ENCODE measurements at regions of chr15 and their contacts with region 1.

Region 1: DNA sequence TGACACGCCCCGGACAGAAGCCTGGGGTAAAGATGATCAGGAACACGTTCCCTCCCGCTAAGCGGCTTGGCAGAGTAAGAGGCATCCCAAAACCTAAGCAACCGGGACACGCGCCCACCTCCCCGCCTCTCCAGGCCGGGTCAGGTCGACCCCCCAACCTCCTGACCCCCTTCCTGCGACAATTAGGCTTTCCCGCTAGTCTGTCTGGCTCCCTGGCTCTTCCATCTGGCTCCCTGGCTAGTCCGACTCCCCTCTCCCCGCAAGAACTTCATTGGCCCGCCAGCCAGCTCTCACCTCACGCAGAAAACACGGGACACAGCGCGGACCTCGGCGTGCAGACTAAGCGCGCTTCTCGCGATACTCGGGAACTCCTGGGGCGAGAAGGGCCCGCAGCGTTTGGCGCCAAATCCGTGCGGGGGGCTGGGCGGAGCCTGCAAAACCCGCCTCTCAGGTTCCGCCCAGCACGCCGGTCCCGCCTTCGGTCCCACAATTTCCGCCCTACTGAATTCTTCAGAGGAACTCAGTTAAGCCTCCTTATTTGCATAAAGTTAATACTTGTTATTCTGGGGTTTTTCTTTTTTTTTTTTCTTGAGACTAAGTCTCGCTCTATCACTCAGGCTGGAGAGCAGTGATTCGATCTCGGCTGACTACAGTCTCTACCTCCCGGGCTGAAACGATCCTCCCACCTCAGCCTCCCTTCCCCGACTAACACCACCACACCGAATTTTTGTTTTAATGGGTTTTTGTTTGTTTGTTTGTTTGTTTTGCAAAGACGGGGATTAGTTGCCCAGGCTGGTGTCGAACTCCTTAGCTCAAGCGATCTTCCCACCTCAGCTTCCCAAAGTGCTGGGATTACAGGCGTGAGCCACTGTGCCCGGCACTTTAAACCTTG is at the start of gene TIPIN:
- DNase-seq: peak; percentile 90 to 96 (median 95)
- ATAC-seq: peak; percentile 99
- H3K4me3 ChIP-seq: peak within 1 kb of the TSS; percentile 92
- H3K4me3 Mint-ChIP-seq: peak within 1 kb of the TSS; percentile 92 to 100 (median 96)
- H3K27ac ChIP-seq: peak within 1 kb of the TSS; percentile 82
- H3K27ac Mint-ChIP-seq: peak within 1 kb of the TSS; percentile 90 to 98 (median 97)
- H3K4me1 ChIP-seq: peaks cover 4 to 6% of the 10 kb centered on the region in 2 donors
- H3K4me1 Mint-ChIP-seq: peaks cover 18 to 35% (median 26%) of the 10 kb centered on the region in 7 donors
- H3K27me3 ChIP-seq: no peaks in the 10 kb centered on the region
- H3K27me3 Mint-ChIP-seq: no peaks in the 10 kb centered on the region
- total RNA-seq, gene TIPIN: 3.8 to 28.2 (median 9.9) TPM

Region 2: DNA sequence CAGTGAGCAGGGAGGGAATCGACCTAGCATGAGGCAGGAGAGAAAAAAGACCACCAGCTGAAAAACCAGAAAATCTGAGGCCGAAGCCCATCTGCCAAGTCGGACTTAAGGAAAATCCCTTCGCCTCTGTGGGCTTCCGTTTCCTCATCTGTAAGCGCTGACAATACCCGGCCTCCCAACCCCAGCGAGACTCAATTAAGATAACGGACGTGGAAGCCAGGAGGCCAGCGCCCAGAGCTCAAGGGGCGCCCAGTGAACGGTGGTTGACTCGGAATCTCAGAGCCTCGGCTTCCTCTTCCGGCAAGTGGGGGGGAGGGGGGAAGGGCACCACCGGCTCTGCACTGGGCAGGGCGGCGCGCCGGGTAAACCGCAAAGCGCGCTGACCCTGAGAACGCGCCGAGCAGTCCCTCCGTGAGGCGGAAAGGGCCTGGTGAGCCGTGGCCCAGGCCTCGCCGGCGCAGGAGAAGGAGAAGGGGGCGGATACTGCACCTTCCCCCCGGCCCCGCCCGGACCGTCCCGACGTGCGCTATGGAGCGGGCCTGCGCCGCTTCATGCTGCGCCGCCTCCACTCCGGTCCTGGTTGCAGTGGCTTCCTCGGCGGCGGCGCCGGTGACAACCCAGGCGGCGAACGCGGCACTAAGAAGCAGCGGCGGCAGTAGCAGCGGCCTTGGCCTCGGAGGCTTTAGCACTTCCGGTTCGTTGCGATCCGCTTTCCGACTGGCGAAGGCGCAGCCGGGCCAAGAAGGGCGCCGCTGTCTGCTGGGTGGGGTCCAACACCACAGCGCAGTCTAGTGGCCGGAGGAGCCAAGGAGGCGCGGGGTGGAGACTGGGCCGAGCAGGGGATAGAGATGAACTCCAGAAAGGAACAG is 839.4 kb before region 1 on chr15 and contains the start of gene DPP8:
- CTCF ChIA-PET with region 1: no interaction called
- POLR2A ChIA-PET with region 1: no interaction called
- intact Hi-C with region 1: loop called in 1 of 2 experiments (anchors 1 kb)
- DNase-seq: peak; percentile 88 to 96 (median 92)
- ATAC-seq: peak; percentile 98
- H3K4me3 ChIP-seq: peak within 1 kb of the TSS; percentile 75
- H3K4me3 Mint-ChIP-seq: peak within 1 kb of the TSS; percentile 93 to 100 (median 96)
- H3K27ac ChIP-seq: peak within 1 kb of the TSS; percentile 83
- H3K27ac Mint-ChIP-seq: peak within 1 kb of the TSS; percentile 86 to 99 (median 94)
- H3K4me1 ChIP-seq: peaks cover 22 to 25% of the 10 kb centered on the region in 2 donors
- H3K4me1 Mint-ChIP-seq: peaks cover 30 to 51% (median 44%) of the 10 kb centered on the region in 7 donors
- H3K27me3 ChIP-seq: no peaks in the 10 kb centered on the region
- H3K27me3 Mint-ChIP-seq: no peaks in the 10 kb centered on the region
- total RNA-seq, gene DPP8: 38.4 to 54.6 (median 40.8) TPM

Region 3: GRCh38 chr15:66369773-66370651 is 13.4 kb after region 1 on chr15:
- CTCF ChIA-PET with region 1: interaction called, 4 read pairs
- POLR2A ChIA-PET with region 1: interaction called, 3 read pairs
- intact Hi-C with region 1: loop called in 1 of 2 experiments (anchors 2 kb)
- DNase-seq: peak in 1 of 9 donors; percentile 29
- ATAC-seq: peak; percentile 50
- H3K4me3 ChIP-seq: peak overlapping the region; percentile 48
- H3K4me3 Mint-ChIP-seq: peak overlapping the region; percentile 3 to 87 (median 80)
- H3K27ac ChIP-seq: peak overlapping the region; percentile 52
- H3K27ac Mint-ChIP-seq: peak overlapping the region; percentile 53 to 93 (median 84)
- H3K4me1 ChIP-seq: peaks cover 7 to 11% of the 10 kb centered on the region in 2 donors
- H3K4me1 Mint-ChIP-seq: peaks cover 10 to 22% (median 15%) of the 10 kb centered on the region in 7 donors
- H3K27me3 ChIP-seq: no peaks in the 10 kb centered on the region
- H3K27me3 Mint-ChIP-seq: no peaks in the 10 kb centered on the region

Region 4: DNA sequence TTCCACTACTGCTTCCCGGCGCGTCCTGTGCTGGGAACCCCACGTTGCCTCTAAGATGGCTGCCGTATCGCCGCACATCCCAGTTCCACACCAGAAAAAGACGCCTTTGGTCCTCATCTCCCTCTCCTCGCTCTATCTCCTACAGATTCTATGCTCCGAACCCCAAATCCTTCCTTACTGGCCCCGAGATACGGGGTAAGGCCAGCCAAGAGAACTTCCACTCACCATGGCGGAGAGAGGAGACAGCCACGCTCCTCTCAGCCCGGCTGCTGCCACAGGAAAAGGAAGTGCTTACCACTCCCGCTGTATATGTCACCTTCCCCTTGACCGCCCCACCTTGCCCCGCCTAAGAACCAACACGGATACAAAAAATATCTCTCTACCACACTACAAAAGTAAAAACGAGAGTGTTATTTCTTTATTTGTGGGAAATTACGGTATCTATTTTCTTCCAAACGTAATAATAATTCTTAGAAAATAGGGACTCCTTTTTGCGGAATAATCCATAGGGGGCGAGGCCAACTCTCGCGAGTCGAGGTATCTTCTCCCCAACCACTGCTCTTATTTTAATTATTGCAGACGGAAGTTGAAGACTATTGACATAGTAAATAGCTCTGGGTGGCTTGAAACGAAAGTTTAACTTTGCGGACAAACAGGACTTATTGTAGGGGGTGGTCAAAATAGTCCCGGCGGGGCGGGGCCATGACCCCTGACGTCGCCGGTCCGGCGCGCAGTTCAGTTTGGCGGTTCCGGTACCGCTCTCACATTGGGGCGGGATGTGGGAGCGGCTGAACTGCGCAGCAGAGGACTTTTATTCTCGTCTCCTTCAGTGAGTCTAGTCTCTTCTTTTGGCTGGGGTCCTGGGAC is 148.2 kb after region 1 on chr15 and contains the starts of genes RPL4 and ZWILCH:
- CTCF ChIA-PET with region 1: interaction called, 4 read pairs
- POLR2A ChIA-PET with region 1: interaction called, 3 read pairs
- intact Hi-C with region 1: loop called (anchors 1 kb)
- DNase-seq: peak; percentile 65 to 88 (median 83)
- ATAC-seq: peak; percentile 93
- H3K4me3 ChIP-seq: peak within 1 kb of the TSS; percentile 99
- H3K4me3 Mint-ChIP-seq: peak within 1 kb of the TSS; percentile 90 to 100 (median 100)
- H3K27ac ChIP-seq: peak within 1 kb of the TSS; percentile 93
- H3K27ac Mint-ChIP-seq: peak within 1 kb of the TSS; percentile 92 to 100 (median 99)
- H3K4me1 ChIP-seq: peaks cover 13 to 22% of the 10 kb centered on the region in 2 donors
- H3K4me1 Mint-ChIP-seq: peaks cover 21 to 57% (median 41%) of the 10 kb centered on the region in 7 donors
- H3K27me3 ChIP-seq: no peaks in the 10 kb centered on the region
- H3K27me3 Mint-ChIP-seq: no peaks in the 10 kb centered on the region
- total RNA-seq, gene RPL4: 2,229 to 4,292 (median 4,136) TPM
- total RNA-seq, gene ZWILCH: 5.6 to 20.3 (median 6.8) TPM

Measured in naive thymus-derived CD4-positive, alpha-beta T cell (primary cell).